ENCODE measurements at regions of chr1 and their contacts with region 1.

Region 1: GRCh38 chr1:167936068-167936929 is at the start of gene DCAF6:
- DNase-seq: peak; percentile 91 to 98
- H3K4me3 ChIP-seq: peak within 1 kb of the TSS; percentile 91
- H3K27ac ChIP-seq: peak within 1 kb of the TSS; percentile 96 to 98
- H3K4me1 ChIP-seq: peaks cover 0 to 14% of the 10 kb centered on the region in 2 donors
- H3K27me3 ChIP-seq: no peaks in the 10 kb centered on the region
- CTCF ChIP-seq: no peak
- total RNA-seq, gene DCAF6: 9.8 TPM

Region 2: GRCh38 chr1:167797015-167797414 is 139.3 kb before region 1 on chr1:
- intact Hi-C with region 1: loop called (anchors 1 kb)
- DNase-seq: peak; percentile 68 to 95
- H3K4me3 ChIP-seq: peak overlapping the region; percentile 9 to 24
- H3K27ac ChIP-seq: peak overlapping the region; percentile 71 to 77
- H3K4me1 ChIP-seq: peaks cover 0 to 22% of the 10 kb centered on the region in 2 donors
- H3K27me3 ChIP-seq: no peaks in the 10 kb centered on the region
- CTCF ChIP-seq: no peak

Region 3: GRCh38 chr1:167899253-167899681 is 37.0 kb before region 1 on chr1:
- intact Hi-C with region 1: loop called (anchors 2 kb)
- DNase-seq: peak; percentile 40 to 88
- H3K4me3 ChIP-seq: no peak overlapping the region
- H3K27ac ChIP-seq: peak overlapping the region; percentile 42 to 65
- H3K4me1 ChIP-seq: peaks cover 0 to 13% of the 10 kb centered on the region in 2 donors
- H3K27me3 ChIP-seq: no peaks in the 10 kb centered on the region
- CTCF ChIP-seq: no peak

Region 4: GRCh38 chr1:168178638-168179437 is 242.5 kb after region 1 on chr1 and contains the start of gene TIPRL:
- intact Hi-C with region 1: loop called (anchors 2 kb)
- DNase-seq: peak; percentile 89 to 99
- H3K4me3 ChIP-seq: peak within 1 kb of the TSS; percentile 66 to 89
- H3K27ac ChIP-seq: peak within 1 kb of the TSS; percentile 95 to 96
- H3K4me1 ChIP-seq: peaks cover 0 to 22% of the 10 kb centered on the region in 2 donors
- H3K27me3 ChIP-seq: no peaks in the 10 kb centered on the region
- CTCF ChIP-seq: peak; percentile 57 to 78 (median 62)
- total RNA-seq, gene TIPRL: 2.7 TPM

Region 5: GRCh38 chr1:168550976-168551375 is 614.7 kb after region 1 on chr1:
- intact Hi-C with region 1: no loop called
- DNase-seq: no peak
- H3K4me3 ChIP-seq: no peak overlapping the region
- H3K27ac ChIP-seq: no peak overlapping the region
- H3K4me1 ChIP-seq: no peaks in the 10 kb centered on the region
- H3K27me3 ChIP-seq: no peaks in the 10 kb centered on the region
- CTCF ChIP-seq: no peak